ENCODE measurements at regions of chr20 and their contacts with region 1.

Region 1: DNA sequence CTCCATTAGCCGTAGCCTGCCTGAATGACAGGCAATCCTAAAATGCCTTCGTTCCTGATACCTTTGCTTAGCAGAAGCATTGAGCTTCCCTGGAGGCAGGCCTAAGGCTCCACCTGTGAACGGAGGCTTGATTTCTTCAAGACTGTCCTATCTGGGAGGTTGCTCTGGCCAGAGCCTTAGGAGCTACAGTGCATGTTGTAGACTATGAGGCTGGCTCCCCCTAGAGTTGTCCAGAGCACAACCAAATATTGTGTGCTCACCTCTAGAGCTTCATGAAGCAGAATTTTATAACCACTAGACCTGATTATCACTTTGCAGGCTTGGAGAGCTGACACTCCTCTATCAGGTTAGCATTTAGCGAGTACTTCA is 217.8 kb downstream of the MAFB start:
- DNase-seq: peak; percentile 47 to 64
- H3K4me3 ChIP-seq: no peak overlapping the region
- H3K4me3 Mint-ChIP-seq: no peak overlapping the region
- H3K27ac Mint-ChIP-seq: no peak overlapping the region
- H3K4me1 ChIP-seq: peaks cover 6% of the 10 kb centered on the region
- H3K4me1 Mint-ChIP-seq: peaks cover 2% of the 10 kb centered on the region
- H3K27me3 ChIP-seq: no peaks in the 10 kb centered on the region
- H3K27me3 Mint-ChIP-seq: no peaks in the 10 kb centered on the region
- CTCF ChIP-seq: peak; percentile 19 to 28

Region 2: GRCh38 chr20:40160097-40160550 is 311.1 kb before region 1 on chr20:
- CTCF ChIA-PET with region 1: interaction called, 5 read pairs
- POLR2A ChIA-PET with region 1: no interaction called
- intact Hi-C with region 1: loop called (anchors 1 kb)
- DNase-seq: peak; percentile 80 to 84
- H3K4me3 ChIP-seq: no peak overlapping the region
- H3K4me3 Mint-ChIP-seq: peak overlapping the region; percentile 22
- H3K27ac Mint-ChIP-seq: no peak overlapping the region
- H3K4me1 ChIP-seq: no peaks in the 10 kb centered on the region
- H3K4me1 Mint-ChIP-seq: no peaks in the 10 kb centered on the region
- H3K27me3 ChIP-seq: no peaks in the 10 kb centered on the region
- H3K27me3 Mint-ChIP-seq: peaks cover 3% of the 10 kb centered on the region
- CTCF ChIP-seq: peak; percentile 98 to 99

Region 3: GRCh38 chr20:40258931-40259330 is 212.3 kb before region 1 on chr20:
- CTCF ChIA-PET with region 1: no interaction called
- POLR2A ChIA-PET with region 1: no interaction called
- intact Hi-C with region 1: loop called (anchors 2 kb)
- DNase-seq: no peak
- H3K4me3 ChIP-seq: no peak overlapping the region
- H3K4me3 Mint-ChIP-seq: no peak overlapping the region
- H3K27ac Mint-ChIP-seq: no peak overlapping the region
- H3K4me1 ChIP-seq: no peaks in the 10 kb centered on the region
- H3K4me1 Mint-ChIP-seq: no peaks in the 10 kb centered on the region
- H3K27me3 ChIP-seq: no peaks in the 10 kb centered on the region; the same call in 1 of the 2 replicates
- H3K27me3 Mint-ChIP-seq: peaks cover 20% of the 10 kb centered on the region
- CTCF ChIP-seq: no peak

Region 4: GRCh38 chr20:40323361-40323794 is 147.9 kb before region 1 on chr20:
- CTCF ChIA-PET with region 1: no interaction called
- POLR2A ChIA-PET with region 1: no interaction called
- intact Hi-C with region 1: no loop called
- DNase-seq: no peak
- H3K4me3 ChIP-seq: no peak overlapping the region
- H3K4me3 Mint-ChIP-seq: no peak overlapping the region
- H3K27ac Mint-ChIP-seq: no peak overlapping the region
- H3K4me1 ChIP-seq: 0 out of 2 replicates have a peak, but pooled peaks cover 6% of the 10 kb centered on the region
- H3K4me1 Mint-ChIP-seq: peaks cover 6% of the 10 kb centered on the region
- H3K27me3 ChIP-seq: no peaks in the 10 kb centered on the region
- H3K27me3 Mint-ChIP-seq: peaks cover 10% of the 10 kb centered on the region
- CTCF ChIP-seq: no peak

Region 5: GRCh38 chr20:40754339-40754943 is 283.2 kb after region 1 on chr20:
- CTCF ChIA-PET with region 1: no interaction called
- POLR2A ChIA-PET with region 1: no interaction called
- intact Hi-C with region 1: no loop called
- DNase-seq: peak in 1 of 2 experiments; percentile 32
- H3K4me3 ChIP-seq: no peak overlapping the region
- H3K4me3 Mint-ChIP-seq: no peak overlapping the region
- H3K27ac Mint-ChIP-seq: no peak overlapping the region
- H3K4me1 ChIP-seq: no peaks in the 10 kb centered on the region
- H3K4me1 Mint-ChIP-seq: no peaks in the 10 kb centered on the region
- H3K27me3 ChIP-seq: peaks cover 1% of the 10 kb centered on the region; the same call in 1 of the 2 replicates
- H3K27me3 Mint-ChIP-seq: peaks cover 30% of the 10 kb centered on the region
- CTCF ChIP-seq: no peak